Posterior vena cava (tissue), 2 donors: ENCODE measurements at regions of chr12 and their contacts with region 1.

Region 1: DNA sequence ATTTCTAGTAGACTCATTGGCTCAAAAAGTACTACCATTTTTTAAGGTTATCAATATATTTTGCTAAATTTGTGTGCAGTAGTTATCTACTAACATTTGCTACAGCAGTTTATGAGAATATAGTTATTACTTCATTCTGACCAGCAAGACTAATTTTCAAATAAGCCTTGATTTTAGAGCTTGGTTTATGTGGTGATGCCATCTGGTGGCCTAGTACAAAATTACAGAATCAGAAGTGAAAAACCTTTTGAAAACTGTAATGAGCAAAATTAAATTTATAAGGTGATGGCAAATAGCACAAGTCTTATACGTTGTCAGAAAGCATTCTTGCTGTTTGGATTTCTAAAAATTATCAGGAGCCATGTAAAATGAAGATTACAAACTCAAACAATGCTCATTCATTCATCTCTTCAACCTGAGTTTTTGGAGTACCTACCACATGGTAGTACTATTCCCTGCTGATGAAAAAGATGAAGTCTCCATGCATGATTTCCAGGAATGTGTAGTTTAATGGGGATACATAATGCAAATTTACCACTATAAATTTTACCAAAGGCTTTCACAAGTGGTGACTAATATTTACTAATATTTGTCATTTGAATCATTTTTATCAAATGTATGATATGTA is 51.0 kb downstream of the MAGOHB start:
- DNase-seq: no peak

Region 2: GRCh38 chr12:10235761-10236631 is 326.4 kb before region 1 on chr12:
- intact Hi-C with region 1: loop called (anchors 5 kb)
- DNase-seq: no peak

Region 3: DNA sequence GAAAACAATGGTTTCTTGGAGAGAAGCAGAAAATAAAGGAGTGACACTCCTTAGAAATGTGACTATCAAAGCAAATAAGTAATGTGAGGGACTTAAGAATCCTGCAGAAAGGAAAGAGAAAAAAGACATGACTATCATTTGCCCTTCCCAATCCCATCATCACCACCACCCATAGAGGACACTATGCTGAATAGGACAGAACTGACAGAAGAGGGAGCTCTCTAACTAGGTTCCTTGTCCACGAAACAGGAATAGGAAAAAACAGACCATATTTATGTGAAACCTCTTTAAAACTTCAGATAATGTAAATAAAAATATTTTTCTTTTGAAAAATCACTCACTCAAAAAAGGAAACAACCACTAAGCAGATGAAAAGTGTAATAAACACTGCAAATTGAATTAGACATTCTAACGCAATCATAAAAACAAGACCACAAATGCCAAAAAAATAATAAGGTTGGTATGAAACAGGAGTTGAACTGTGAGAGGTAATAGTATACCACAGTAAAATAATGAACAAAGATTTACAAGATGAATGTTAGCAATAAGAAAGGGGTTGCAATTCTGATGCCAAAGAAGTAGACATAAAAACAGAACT is 230.7 kb before region 1 on chr12:
- intact Hi-C with region 1: loop called in 1 of 2 experiments (anchors 5 kb)
- DNase-seq: no peak

Region 4: DNA sequence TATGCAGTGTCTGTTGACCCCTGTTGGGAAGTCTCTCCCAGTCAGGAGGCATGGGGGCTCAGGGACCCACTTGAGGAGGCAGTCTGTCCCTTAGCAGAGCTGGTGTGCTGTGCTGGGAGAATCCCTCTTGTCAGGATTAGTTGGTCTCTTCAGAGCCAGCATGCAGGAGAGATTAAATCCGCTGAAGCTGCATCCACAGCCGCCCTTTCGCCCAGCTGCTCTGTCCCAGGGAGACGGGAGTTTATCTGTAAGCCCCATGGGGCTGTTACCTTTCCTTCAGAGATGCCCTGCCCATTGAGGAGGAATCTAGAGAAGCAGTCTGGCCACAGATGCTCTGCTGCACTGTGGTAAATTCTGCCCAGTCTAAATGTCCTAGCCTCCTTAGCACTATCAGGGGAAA is 96.1 kb before region 1 on chr12:
- intact Hi-C with region 1: no loop called
- DNase-seq: no peak

Region 5: GRCh38 chr12:10491766-10492165 is 70.7 kb before region 1 on chr12:
- intact Hi-C with region 1: no loop called
- DNase-seq: no peak

Region 6: GRCh38 chr12:11040162-11040561 is 477.7 kb after region 1 on chr12:
- intact Hi-C with region 1: no loop called
- DNase-seq: no peak